ENCODE measurements at regions of chr16 and their contacts with region 1.

Region 1: GRCh38 chr16:56988948-56989945 is at the start of gene NLRC5:
- DNase-seq: peak; percentile 93
- H3K4me3 ChIP-seq: peak within 1 kb of the TSS; percentile 80
- H3K27ac ChIP-seq: peak within 1 kb of the TSS; percentile 80
- H3K4me1 ChIP-seq: peaks cover 79% of the 10 kb centered on the region
- CTCF ChIP-seq: no peak
- total RNA-seq, gene NLRC5: 156 and 199 TPM in 2 replicates

Region 2: GRCh38 chr16:56964243-56965148 is 24.8 kb before region 1 on chr16:
- CTCF ChIA-PET with region 1: interaction called, 3 read pairs
- POLR2A ChIA-PET with region 1: interaction called, 42 read pairs
- intact Hi-C with region 1: loop called (anchors 1 kb)
- DNase-seq: peak; percentile 96
- H3K4me3 ChIP-seq: no peak overlapping the region
- H3K27ac ChIP-seq: peak overlapping the region; percentile 16
- H3K4me1 ChIP-seq: peaks cover 21% of the 10 kb centered on the region
- CTCF ChIP-seq: peak; percentile 100

Region 3: DNA sequence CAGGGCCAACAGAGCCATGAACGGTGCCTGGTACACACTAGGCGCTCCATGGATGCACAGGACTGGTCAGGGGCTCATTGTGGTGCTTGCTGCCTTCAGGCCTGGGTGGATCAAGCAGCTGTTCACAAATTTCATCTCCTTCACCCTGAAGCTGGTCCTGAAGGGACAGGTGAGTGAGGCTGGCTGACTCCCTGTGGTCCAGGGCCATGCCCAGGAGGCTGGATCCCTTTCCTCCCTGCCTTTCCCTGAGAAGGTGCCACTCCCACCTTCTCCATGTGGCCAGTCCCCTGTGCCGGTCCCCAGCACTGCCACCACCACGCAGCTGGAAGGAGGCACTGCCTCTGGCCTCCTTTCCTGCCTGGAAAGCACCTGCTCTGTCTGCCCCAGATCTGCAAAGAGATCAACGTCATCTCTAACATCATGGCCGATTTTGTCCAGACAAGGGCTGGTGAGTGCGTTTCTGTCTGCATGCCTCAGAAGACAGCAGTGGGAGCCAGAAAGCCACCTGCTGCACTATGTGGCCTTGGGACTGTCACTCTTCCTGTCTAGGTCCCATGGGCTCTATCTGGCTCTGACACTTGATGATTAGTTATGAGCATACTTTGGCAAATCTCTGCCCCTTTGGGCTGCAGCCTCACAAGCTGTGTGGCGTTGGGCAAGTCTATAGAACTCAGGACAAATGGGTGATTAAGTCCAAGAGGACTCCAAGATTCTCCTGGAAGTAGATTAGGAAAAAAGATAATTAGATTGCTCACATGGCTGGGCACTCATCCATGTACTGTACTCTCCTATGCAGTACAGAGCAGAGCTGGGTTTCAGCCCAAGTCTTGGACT is 18.1 kb before region 1 on chr16:
- CTCF ChIA-PET with region 1: interaction called, 6 read pairs
- POLR2A ChIA-PET with region 1: interaction called, 42 read pairs
- intact Hi-C with region 1: loop called (anchors 1 kb)
- DNase-seq: peak; percentile 91
- H3K4me3 ChIP-seq: no peak overlapping the region
- H3K27ac ChIP-seq: peak overlapping the region; percentile 73
- H3K4me1 ChIP-seq: peaks cover 62% of the 10 kb centered on the region
- CTCF ChIP-seq: no peak; the same call in 1 of the 2 replicates

Region 4: DNA sequence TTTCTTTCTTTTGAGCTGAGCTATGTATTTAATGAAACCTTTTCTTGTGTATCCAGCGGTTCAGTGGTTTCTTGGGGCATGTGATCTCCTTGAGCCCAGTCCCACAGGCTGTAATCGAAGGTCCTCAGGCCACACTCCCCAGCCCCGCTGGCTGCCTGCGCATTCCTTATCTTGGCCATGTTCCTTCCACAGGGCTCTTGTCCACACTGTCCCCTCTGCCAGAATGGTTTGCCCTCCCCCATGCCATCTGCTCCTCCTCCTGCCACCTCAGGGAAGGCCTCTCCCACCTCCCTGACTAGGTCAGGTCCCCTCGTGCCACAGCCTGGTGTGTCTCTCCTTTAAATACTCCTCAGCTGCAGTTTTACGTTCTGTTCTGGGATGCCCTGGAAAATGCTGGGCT is 12.0 kb before region 1 on chr16:
- CTCF ChIA-PET with region 1: interaction called, 5 read pairs
- POLR2A ChIA-PET with region 1: interaction called, 42 read pairs
- intact Hi-C with region 1: no loop called
- DNase-seq: no peak
- H3K4me3 ChIP-seq: no peak overlapping the region
- H3K27ac ChIP-seq: peak overlapping the region; percentile 80
- H3K4me1 ChIP-seq: peaks cover 95% of the 10 kb centered on the region
- CTCF ChIP-seq: no peak

Region 5: GRCh38 chr16:57003439-57004386 is 14.5 kb after region 1 on chr16:
- CTCF ChIA-PET with region 1: no interaction called
- POLR2A ChIA-PET with region 1: interaction called, 7 read pairs
- intact Hi-C with region 1: loop called (anchors 1 kb)
- DNase-seq: peak; percentile 76
- H3K4me3 ChIP-seq: peak overlapping the region; percentile 43
- H3K27ac ChIP-seq: peak overlapping the region; percentile 74
- H3K4me1 ChIP-seq: peaks cover 76% of the 10 kb centered on the region
- CTCF ChIP-seq: no peak

Region 6: DNA sequence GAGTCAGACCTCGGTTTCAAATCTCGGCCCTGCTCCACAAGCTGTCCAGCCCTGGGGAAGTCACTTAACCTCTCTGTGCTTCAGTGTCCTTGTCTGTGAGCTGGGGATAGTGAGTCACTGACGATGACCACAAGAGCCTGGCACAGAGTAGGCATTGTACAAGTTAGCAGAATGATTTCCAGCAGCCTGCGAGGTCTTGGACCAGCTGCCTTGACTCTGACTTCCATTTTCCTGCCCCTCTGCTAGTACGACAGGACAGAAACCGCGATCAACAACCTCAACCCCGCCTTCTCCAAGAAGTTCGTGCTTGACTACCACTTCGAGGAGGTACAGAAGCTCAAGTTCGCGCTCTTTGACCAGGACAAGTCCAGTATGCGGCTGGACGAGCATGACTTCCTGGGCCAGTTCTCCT is 123.8 kb after region 1 on chr16:
- CTCF ChIA-PET with region 1: no interaction called
- POLR2A ChIA-PET with region 1: no interaction called
- intact Hi-C with region 1: no loop called
- DNase-seq: no peak
- H3K4me3 ChIP-seq: no peak overlapping the region
- H3K27ac ChIP-seq: no peak overlapping the region
- H3K4me1 ChIP-seq: peaks cover 26% of the 10 kb centered on the region
- CTCF ChIP-seq: no peak

Region 7: DNA sequence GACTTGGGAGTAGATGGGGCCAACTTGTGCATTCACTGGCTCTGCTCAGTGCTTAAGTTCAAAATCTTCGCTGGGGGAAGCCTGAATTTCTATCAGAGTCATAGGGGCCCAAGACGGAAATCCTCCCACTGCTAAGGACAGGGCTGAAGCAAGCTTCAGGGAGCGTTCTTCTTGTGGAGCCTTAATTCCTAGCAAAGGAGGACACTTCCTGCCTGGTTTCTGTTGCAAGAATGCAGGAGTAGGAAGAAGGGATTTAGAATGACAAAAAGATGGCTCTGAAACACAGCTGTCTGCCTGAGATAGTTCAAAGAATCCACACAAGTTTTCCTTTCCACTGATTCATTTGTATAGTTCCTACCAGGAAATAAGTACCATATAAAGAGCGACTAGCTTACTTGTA is 170.2 kb after region 1 on chr16:
- CTCF ChIA-PET with region 1: no interaction called
- POLR2A ChIA-PET with region 1: no interaction called
- intact Hi-C with region 1: no loop called
- DNase-seq: no peak
- H3K4me3 ChIP-seq: no peak overlapping the region
- H3K27ac ChIP-seq: no peak overlapping the region
- H3K4me1 ChIP-seq: no peaks in the 10 kb centered on the region
- CTCF ChIP-seq: no peak

Measured in OCI-LY7 (cell line).